Activated CD8-positive, alpha-beta T cell treated with anti-CD3 and anti-CD28 coated beads for 36 hours (primary cell): ENCODE measurements at regions of chr22 and their contacts with region 1.

Region 1: GRCh38 chr22:25334162-25334490 is 114.7 kb downstream of the CRYBB2 start:
- DNase-seq: peak; percentile 79
- ATAC-seq: peak; percentile 79
- H3K4me3 Mint-ChIP-seq: no peak overlapping the region
- H3K27ac Mint-ChIP-seq: no peak overlapping the region
- H3K4me1 Mint-ChIP-seq: no peaks in the 10 kb centered on the region
- H3K27me3 Mint-ChIP-seq: no peaks in the 10 kb centered on the region
- CTCF ChIP-seq: peak; percentile 57

Region 2: DNA sequence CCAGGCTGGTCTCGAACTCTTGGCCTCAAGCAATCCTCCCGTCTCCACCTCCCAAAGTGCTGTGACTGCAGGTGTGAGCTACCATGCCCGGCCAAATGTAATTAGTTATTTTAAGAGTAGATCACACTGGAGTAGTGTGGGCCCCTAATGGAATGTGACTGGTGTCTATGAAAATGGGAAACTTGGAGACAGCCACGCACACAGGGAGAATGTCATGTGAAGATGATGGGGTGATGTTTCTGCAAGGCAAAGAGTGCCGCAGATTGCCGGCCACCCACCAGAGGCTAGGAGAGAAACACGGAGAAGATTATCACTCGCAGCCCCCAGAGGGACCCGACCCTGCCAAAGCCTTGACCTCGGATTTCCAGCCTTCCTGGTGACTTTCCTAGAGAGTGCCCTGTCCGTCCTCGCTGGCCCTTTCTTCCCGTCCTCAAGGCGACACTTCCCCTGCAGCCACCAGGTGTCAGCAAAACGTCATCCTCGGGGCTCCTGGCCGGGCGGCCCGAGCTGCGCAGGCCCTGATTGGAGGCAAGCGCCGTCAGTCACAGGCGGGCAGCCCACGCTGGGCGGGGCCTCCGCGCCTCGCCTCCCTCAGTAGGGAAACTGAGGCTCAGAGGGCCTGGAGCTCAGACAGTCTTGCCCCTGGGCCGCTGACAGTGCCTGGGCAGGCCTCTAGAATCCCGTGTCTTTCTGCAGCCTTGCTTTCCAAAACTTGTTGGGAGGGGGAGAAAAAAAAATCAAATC is 98.4 kb before region 1 on chr22:
- CTCF ChIA-PET with region 1: interaction called, 9 read pairs
- POLR2A ChIA-PET with region 1: no interaction called
- intact Hi-C with region 1: loop called (anchors 5 kb)
- DNase-seq: peak; percentile 86
- ATAC-seq: peak; percentile 100
- H3K4me3 Mint-ChIP-seq: no peak overlapping the region
- H3K27ac Mint-ChIP-seq: no peak overlapping the region
- H3K4me1 Mint-ChIP-seq: peaks cover 3% of the 10 kb centered on the region
- H3K27me3 Mint-ChIP-seq: peaks cover 37% of the 10 kb centered on the region
- CTCF ChIP-seq: peak; percentile 86